Activated naive CD4-positive, alpha-beta T cell treated with anti-CD3 and anti-CD28 coated beads for 36 hours (primary cell): ENCODE measurements at regions of chr1 and their contacts with region 1.

Region 1: GRCh38 chr1:156065212-156065611 is 4.3 kb downstream of the RAB25 start:
- DNase-seq: no peak
- H3K4me3 Mint-ChIP-seq: no peak overlapping the region
- H3K27ac Mint-ChIP-seq: no peak overlapping the region
- H3K4me1 Mint-ChIP-seq: peaks cover 14% of the 10 kb centered on the region
- H3K27me3 Mint-ChIP-seq: no peaks in the 10 kb centered on the region

Region 2: GRCh38 chr1:155466996-155467395 is 598.2 kb before region 1 on chr1:
- CTCF ChIA-PET with region 1: no interaction called
- intact Hi-C with region 1: no loop called
- DNase-seq: no peak
- H3K4me3 Mint-ChIP-seq: no peak overlapping the region
- H3K27ac Mint-ChIP-seq: peak overlapping the region; percentile 74
- H3K4me1 Mint-ChIP-seq: peaks cover 54% of the 10 kb centered on the region
- H3K27me3 Mint-ChIP-seq: no peaks in the 10 kb centered on the region

Region 3: GRCh38 chr1:155989242-155990004 is 75.8 kb before region 1 on chr1:
- CTCF ChIA-PET with region 1: interaction called, 11 read pairs
- intact Hi-C with region 1: no loop called
- DNase-seq: peak; percentile 87
- H3K4me3 Mint-ChIP-seq: no peak overlapping the region
- H3K27ac Mint-ChIP-seq: no peak overlapping the region
- H3K4me1 Mint-ChIP-seq: peaks cover 4% of the 10 kb centered on the region
- H3K27me3 Mint-ChIP-seq: no peaks in the 10 kb centered on the region

Region 4: DNA sequence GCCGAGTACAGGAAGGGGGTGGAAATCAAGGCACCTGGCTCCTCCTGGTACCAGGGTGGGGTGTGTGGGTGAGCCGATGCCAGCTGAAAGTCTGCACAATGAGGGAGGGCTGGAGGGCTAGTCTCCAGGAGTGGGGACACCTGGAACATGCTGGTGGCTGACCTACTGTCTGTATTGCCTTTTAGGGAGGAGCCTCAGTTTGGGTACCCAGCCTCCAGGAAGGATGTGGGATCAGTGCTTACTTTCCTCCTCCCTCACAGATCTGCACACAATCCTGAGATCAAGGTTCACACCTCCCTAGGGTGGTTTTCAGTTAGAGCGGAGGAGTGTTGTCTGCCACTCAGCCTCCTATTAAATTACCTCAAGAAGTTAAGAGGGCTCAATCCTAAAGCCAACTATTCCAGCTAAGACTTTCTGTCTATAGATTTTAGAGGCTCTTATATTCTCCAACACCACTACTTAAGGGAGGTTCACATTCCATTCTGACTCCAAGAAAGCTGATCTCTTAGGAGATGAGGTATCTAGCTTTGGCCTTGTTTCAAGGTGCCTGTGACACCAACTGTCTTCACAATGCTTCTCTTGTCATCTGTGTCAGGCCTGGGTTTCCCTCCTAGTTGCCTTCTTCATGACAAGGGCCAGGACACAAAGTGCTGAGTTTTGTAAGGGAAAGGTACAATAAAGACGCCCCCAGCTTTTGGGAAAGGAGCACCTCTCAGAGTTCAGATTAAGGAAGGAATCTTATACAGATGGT is 60.2 kb before region 1 on chr1:
- CTCF ChIA-PET with region 1: interaction called, 11 read pairs
- intact Hi-C with region 1: no loop called
- DNase-seq: peak; percentile 46
- H3K4me3 Mint-ChIP-seq: no peak overlapping the region
- H3K27ac Mint-ChIP-seq: peak overlapping the region; percentile 32
- H3K4me1 Mint-ChIP-seq: peaks cover 12% of the 10 kb centered on the region
- H3K27me3 Mint-ChIP-seq: no peaks in the 10 kb centered on the region

Region 5: DNA sequence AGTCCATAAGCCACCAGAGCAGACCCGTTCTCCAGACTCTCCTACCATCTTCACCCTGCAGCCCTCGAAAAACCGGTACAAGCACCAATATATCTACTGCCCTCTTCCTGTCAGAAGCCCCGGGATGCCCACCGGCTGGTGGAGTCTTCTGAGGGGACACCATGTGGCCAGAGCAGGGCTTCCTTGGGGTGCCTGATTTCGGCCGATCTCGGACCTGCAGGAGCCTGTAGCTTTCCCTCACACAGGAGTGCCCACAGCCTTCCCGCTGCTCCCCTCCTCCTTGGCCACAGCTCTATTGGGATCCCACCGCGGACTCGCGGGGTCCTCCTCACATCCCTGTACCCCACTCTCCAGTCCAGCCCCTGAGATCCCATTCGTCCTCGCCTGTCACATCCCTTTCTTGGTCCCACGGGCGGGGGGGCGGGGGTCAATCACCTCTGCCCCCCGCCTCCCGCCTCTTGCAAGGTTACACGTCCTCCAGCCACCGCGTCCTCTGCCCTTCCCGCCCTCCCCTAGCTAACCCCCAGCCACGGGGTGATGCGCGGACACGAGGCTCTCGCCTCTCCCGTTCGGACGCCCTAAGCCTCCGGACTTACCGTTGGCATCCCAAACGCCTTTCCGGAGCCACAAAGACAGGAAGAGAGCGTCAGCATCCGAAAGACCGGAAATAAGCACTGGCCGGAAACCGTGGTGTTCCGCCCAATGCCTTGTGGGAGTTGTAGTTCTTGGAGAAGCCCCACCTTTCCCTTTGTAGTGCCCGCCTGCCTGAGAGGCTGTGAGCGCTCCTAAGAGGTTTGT is 44.7 kb before region 1 on chr1 and contains the start of gene SSR2:
- CTCF ChIA-PET with region 1: interaction called, 13 read pairs
- intact Hi-C with region 1: loop called (anchors 1 kb)
- DNase-seq: peak; percentile 94
- H3K4me3 Mint-ChIP-seq: peak within 1 kb of the TSS; percentile 84
- H3K27ac Mint-ChIP-seq: peak within 1 kb of the TSS; percentile 91
- H3K4me1 Mint-ChIP-seq: peaks cover 28% of the 10 kb centered on the region
- H3K27me3 Mint-ChIP-seq: no peaks in the 10 kb centered on the region
- total RNA-seq, gene SSR2: 141 to 142 TPM

Region 6: GRCh38 chr1:156025877-156026276 is 39.3 kb before region 1 on chr1:
- CTCF ChIA-PET with region 1: interaction called, 13 read pairs
- intact Hi-C with region 1: loop called (anchors 1 kb)
- DNase-seq: peak; percentile 59
- H3K4me3 Mint-ChIP-seq: no peak overlapping the region
- H3K27ac Mint-ChIP-seq: no peak overlapping the region
- H3K4me1 Mint-ChIP-seq: peaks cover 7% of the 10 kb centered on the region
- H3K27me3 Mint-ChIP-seq: no peaks in the 10 kb centered on the region

Region 7: GRCh38 chr1:156082309-156083091 is 17.3 kb after region 1 on chr1 and contains the start of gene MEX3A:
- CTCF ChIA-PET with region 1: interaction called, 19 read pairs
- intact Hi-C with region 1: no loop called
- DNase-seq: peak; percentile 61
- H3K4me3 Mint-ChIP-seq: peak within 1 kb of the TSS; percentile 75
- H3K27ac Mint-ChIP-seq: no peak within 1 kb of the TSS
- H3K4me1 Mint-ChIP-seq: peaks cover 5% of the 10 kb centered on the region
- H3K27me3 Mint-ChIP-seq: peaks cover 26% of the 10 kb centered on the region
- total RNA-seq, gene MEX3A: 0.22 to 0.36 TPM

Region 8: DNA sequence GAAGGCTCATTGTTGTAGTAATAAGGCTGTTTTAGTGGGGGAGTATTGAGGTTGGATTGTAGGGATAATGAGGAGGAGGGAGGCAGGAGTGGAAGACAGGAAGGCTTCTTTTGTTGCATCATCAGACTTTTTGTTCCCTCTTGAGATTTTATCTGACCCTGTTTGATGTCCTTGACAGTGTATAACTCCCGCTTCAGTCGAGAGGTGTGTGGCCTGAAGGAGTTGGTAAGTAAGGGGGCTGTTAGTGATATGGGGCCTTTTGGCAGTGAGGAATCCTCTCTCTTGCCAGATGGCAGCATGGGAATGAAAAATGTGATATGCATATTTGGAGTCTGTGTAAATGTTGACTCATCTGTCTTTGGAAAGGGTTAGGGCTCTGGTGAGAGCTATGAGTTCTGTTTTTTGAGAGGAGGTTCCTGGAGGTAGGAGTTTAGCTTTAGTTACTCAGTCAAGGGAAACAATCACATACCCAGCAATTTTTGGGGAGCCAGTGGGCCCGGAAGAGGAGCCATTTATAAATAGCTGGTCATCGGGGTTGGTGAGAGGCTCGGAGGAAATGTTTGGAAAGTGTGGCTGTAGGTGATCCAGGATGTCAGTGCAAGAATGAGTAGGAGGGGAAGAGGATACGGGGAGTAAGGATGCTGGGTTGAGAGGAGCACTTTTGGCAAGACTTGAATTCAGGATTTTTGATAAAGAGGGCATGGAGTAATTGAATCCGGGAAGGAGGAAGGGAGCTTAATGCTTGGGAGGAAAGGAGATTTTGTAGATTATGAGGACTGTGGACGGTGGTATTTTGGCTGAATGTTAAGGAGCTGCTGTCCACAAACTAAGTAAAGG is 1209.7 kb after region 1 on chr1:
- CTCF ChIA-PET with region 1: no interaction called
- intact Hi-C with region 1: no loop called
- DNase-seq: no peak
- H3K4me3 Mint-ChIP-seq: no peak overlapping the region
- H3K27ac Mint-ChIP-seq: no peak overlapping the region
- H3K4me1 Mint-ChIP-seq: no peaks in the 10 kb centered on the region
- H3K27me3 Mint-ChIP-seq: peaks cover 9% of the 10 kb centered on the region